Kidney (tissue), 22 donors: ENCODE measurements at regions of chr12 and their contacts with region 1.

Region 1: GRCh38 chr12:121709478-121709961 is 3.0 kb upstream of the TMEM120B start:
- DNase-seq: peak in 1 of 5 donors; percentile 20
- H3K4me3 ChIP-seq: no peak overlapping the region
- H3K27ac ChIP-seq: no peak overlapping the region
- H3K4me1 ChIP-seq: peaks cover 0 to 11% (median 6%) of the 10 kb centered on the region in 3 donors
- H3K27me3 ChIP-seq: no peaks in the 10 kb centered on the region
- CTCF ChIP-seq: no peak

Region 2: DNA sequence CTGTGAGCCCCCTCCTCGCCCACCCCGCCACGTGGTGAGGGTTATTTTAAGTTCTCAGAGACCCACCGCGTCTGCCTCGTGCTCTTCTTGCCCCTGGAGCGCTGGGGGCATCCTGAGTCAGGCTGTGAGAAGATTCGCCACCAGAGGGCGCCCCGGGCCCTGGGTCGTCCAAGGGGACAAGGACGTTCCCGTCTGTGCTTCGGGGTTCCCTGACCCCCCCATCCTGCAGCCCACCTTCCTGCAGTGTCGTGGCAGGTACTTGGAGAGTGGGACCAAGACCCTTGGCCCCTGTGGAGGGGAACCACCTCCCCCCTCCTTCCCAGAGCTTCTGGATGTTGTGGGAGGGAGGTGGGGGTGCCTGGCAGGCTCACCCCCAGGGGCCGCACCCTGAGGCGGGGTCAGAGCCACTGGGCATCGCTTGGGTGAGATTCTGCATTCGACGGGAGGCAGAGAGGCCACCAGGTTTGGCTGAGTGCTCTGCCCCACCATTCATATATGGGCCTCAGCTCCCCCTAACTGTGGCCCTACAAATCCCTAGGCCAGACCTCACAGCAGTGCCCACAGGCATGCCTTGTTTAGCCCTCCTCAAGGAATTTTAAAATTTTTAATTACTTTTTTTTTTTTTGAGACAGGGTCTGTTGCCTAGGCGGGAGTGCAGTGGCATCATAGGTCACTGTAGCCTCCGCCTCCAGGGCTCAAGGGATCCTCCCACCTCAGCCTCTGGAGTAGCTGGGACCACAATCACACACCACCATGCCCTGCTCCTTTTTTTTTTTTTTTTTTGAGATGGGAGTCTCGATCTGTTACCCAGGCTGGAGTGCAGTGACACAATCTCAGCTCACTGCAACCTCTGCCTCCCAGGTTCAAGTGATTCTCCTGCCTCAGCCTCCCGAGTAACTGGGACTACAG is 66.9 kb after region 1 on chr12:
- intact Hi-C with region 1: loop called (anchors 5 kb)
- DNase-seq: peak; percentile 71 to 91 (median 80)
- H3K4me3 ChIP-seq: no peak overlapping the region
- H3K27ac ChIP-seq: peak overlapping the region in 1 of 2 donors; percentile 20
- H3K4me1 ChIP-seq: peaks cover 0 to 18% (median 12%) of the 10 kb centered on the region in 3 donors
- H3K27me3 ChIP-seq: no peaks in the 10 kb centered on the region
- CTCF ChIP-seq: peak; percentile 88